ENCODE measurements at regions of chr20 and their contacts with region 1.

Region 1: DNA sequence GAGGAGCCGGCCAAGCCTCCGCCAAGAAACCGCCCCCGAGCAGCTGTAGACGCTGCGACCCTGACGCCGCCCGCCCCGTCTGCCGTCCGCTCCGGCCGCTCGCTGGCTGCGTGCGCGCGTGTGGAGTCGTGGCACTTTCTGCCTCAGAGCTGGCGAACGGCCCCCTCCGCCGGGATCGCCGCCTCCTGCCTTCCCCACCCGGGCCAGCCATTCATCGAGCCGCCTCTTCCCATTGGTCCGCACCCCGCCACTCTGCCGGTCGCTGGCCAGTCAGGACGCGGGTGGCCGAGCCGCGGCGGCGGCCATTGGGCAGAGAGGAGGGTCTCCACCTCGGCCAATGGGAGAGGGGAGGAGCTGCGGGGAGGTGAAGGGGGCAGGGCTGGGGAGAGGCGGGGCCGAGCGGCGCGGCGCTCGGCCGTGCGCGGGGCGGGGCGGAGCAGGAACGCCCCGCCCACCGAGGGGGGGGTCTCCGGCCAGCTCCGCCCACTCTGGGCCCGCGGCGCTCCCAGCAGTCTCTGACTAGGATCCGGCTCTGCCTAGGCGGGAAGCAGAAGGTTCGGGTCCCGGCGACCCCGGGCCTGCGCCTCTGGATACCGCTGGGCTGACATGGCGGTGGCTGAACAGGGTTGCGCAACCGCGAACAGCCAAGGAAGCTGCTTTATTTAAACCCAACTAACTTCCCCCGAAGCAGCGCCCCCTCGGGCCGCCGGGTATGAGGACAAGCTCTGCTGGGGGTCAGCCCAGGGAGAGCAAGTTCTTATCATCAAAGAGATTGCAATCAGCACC is at the start of gene RRBP1:
- DNase-seq: peak; percentile 70
- ATAC-seq: peak; percentile 94
- H3K4me3 ChIP-seq: peak within 1 kb of the TSS; percentile 70 to 83
- H3K27ac ChIP-seq: peak within 1 kb of the TSS; percentile 68
- H3K4me1 ChIP-seq: peaks cover 21% of the 10 kb centered on the region
- H3K27me3 ChIP-seq: peaks cover 16% of the 10 kb centered on the region
- CTCF ChIP-seq: peak; percentile 88
- total RNA-seq, gene RRBP1: 152 TPM

Region 2: GRCh38 chr20:17648315-17648646 is 34.0 kb before region 1 on chr20:
- CTCF ChIA-PET with region 1: interaction called, 3 read pairs
- POLR2A ChIA-PET with region 1: interaction called, 13 read pairs
- in situ Hi-C with region 1: no loop called
- intact Hi-C with region 1: no loop called
- DNase-seq: no peak
- ATAC-seq: no peak
- H3K4me3 ChIP-seq: no peak overlapping the region
- H3K27ac ChIP-seq: peak overlapping the region; percentile 75; the same call in 1 of the 2 replicates
- H3K4me1 ChIP-seq: peaks cover 79% of the 10 kb centered on the region
- H3K27me3 ChIP-seq: no peaks in the 10 kb centered on the region
- CTCF ChIP-seq: no peak

Region 3: GRCh38 chr20:17655865-17656479 is 26.3 kb before region 1 on chr20:
- CTCF ChIA-PET with region 1: interaction called, 10 read pairs
- POLR2A ChIA-PET with region 1: no interaction called
- in situ Hi-C with region 1: no loop called
- intact Hi-C with region 1: no loop called
- DNase-seq: no peak
- ATAC-seq: no peak
- H3K4me3 ChIP-seq: no peak overlapping the region
- H3K27ac ChIP-seq: no peak overlapping the region
- H3K4me1 ChIP-seq: peaks cover 16% of the 10 kb centered on the region
- H3K27me3 ChIP-seq: no peaks in the 10 kb centered on the region
- CTCF ChIP-seq: no peak

Region 4: DNA sequence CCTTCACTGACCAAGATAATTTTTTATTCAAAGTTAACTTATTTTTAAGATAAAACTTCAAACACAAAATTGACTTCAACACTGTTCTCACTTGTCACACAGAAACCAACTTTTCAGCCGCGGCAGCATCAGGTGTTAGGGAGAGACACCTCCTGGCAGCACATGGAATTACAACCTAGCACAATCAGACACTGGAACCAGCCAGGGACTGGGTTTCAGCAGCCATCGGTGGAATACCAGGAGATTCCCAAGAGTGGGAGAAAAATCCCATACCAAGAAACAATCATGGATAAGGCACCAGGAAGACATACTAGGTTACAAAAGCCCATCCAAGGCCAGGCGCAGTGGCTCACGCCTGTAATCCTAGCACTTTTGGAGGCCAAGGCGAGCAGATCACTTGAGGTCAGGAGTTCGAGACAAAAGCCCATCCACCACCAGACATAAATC is 216.3 kb after region 1 on chr20:
- CTCF ChIA-PET with region 1: interaction called, 7 read pairs
- POLR2A ChIA-PET with region 1: no interaction called
- in situ Hi-C with region 1: no loop called
- intact Hi-C with region 1: loop called (anchors 5 kb)
- DNase-seq: peak; percentile 53
- ATAC-seq: peak; percentile 86
- H3K4me3 ChIP-seq: no peak overlapping the region
- H3K27ac ChIP-seq: no peak overlapping the region
- H3K4me1 ChIP-seq: no peaks in the 10 kb centered on the region
- H3K27me3 ChIP-seq: no peaks in the 10 kb centered on the region
- CTCF ChIP-seq: peak; percentile 95

Region 5: DNA sequence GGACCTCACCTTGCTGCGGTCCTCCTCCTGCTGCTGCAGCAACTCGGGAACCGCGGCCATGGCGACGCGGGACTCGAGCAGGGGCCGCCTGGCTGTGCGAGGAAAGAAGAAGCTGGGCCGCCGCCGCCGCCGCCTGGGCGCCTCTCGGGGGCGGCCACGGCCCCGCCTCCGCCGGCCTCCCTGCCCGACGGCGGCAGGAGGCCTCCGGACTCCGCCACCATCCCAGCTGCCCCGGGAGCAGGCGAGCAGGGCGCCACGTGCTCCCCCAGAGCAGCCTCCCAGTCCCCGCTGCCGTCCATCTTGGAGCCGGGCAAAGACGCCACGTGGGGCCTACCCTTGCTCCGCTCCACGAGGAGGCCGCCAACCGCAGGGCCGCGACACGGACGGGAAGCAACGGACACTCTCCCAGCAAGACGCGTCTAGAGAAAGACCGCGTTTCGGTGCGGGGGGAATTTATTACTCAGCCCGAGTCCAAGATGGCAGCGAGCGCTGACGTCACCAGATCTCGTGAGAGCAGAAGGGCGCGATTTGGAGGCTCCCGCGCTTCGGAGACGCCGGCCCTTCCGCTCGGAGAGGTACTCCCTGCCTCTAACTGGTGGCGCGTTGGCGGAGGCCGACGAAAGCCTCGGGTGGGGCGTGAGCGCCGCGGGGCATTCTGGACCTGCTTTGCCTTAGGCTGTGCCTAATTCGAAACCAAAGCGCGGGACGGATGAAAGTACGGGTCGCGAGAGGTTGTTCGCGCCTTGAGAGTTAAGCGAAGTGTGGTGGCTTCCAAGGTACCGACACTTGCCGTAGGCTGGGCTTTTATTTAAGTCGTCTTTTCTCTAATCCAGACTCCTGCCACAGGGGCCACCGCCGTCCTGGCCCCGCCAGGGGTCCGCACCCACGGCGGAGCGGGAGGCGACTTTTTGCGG is 286.3 kb after region 1 on chr20 and contains the starts of genes MGME1 and SNX5:
- CTCF ChIA-PET with region 1: no interaction called
- POLR2A ChIA-PET with region 1: interaction called, 10 read pairs
- in situ Hi-C with region 1: no loop called
- intact Hi-C with region 1: no loop called
- DNase-seq: peak; percentile 98
- ATAC-seq: peak; percentile 95
- H3K4me3 ChIP-seq: peak within 1 kb of the TSS; percentile 95 to 97
- H3K27ac ChIP-seq: peak within 1 kb of the TSS; percentile 83
- H3K4me1 ChIP-seq: peaks cover 40% of the 10 kb centered on the region
- H3K27me3 ChIP-seq: no peaks in the 10 kb centered on the region
- CTCF ChIP-seq: no peak
- total RNA-seq, gene MGME1: 27.0 TPM
- total RNA-seq, gene SNX5: 90.8 TPM

Region 6: DNA sequence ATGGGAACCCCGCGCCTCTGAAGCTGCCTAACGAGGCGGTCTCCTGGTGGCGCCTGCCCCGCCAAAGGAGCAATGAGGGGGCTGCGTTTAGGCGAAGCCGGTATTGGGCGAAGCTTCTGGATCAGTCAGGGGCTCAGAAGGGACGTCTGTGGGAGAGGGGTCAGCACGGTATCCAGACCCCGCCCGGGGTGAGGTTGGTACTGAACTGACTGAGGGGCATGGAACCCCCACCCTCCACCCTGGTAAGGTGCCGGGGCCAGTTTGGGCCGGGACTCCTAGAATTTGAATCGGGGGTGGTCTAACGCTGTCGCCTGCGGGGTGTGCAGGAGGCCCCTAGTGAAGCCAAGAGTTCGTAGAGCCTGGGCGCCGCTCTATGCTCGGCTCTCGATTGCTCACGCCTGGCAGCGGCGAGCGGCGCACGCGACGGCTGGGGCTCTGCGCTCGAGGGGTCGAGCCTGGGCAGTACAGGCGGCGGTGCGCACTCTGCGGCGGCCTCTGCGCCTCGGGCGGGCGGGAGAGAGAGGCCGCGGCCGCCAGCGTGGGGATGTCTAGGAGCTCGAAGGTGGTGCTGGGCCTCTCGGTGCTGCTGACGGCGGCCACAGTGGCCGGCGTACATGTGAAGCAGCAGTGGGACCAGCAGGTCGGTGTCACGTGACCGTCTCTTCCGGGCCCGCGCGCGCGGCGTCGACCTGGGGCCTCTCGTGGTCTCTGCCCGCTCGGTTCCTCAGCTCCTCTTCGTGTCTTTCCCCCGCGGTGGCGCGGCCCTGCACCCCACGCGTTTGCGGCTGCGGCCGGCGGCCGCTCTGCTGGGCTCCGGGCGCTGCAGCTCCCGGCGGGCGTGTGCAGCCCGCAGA is 455.3 kb after region 1 on chr20 and contains the starts of genes KAT14 and PET117:
- CTCF ChIA-PET with region 1: no interaction called
- POLR2A ChIA-PET with region 1: interaction called, 16 read pairs
- in situ Hi-C with region 1: no loop called
- intact Hi-C with region 1: no loop called
- DNase-seq: peak; percentile 55
- ATAC-seq: peak; percentile 97
- H3K4me3 ChIP-seq: peak within 1 kb of the TSS; percentile 91 to 99
- H3K27ac ChIP-seq: peak within 1 kb of the TSS; percentile 89
- H3K4me1 ChIP-seq: peaks cover 8% of the 10 kb centered on the region
- H3K27me3 ChIP-seq: no peaks in the 10 kb centered on the region
- CTCF ChIP-seq: no peak
- total RNA-seq, gene KAT14: 12.7 TPM
- total RNA-seq, gene PET117: 14.6 TPM

Measured in Panc1 (cell line).